ENCODE measurements at regions of chr11 and their contacts with region 1.

Region 1: GRCh38 chr11:78838417-78838816 is 263.8 kb upstream of the NARS2 start:
- DNase-seq: peak in 1 of 2 experiments; percentile 51
- H3K4me3 ChIP-seq: no peak overlapping the region
- H3K4me3 Mint-ChIP-seq: no peak overlapping the region
- H3K27ac Mint-ChIP-seq: no peak overlapping the region
- H3K4me1 ChIP-seq: no peaks in the 10 kb centered on the region
- H3K4me1 Mint-ChIP-seq: peaks cover 6% of the 10 kb centered on the region
- H3K27me3 ChIP-seq: no peaks in the 10 kb centered on the region
- H3K27me3 Mint-ChIP-seq: peaks cover 25% of the 10 kb centered on the region
- CTCF ChIP-seq: peak; percentile 62 to 69

Region 2: GRCh38 chr11:78645226-78646202 is 192.9 kb before region 1 on chr11:
- CTCF ChIA-PET with region 1: no interaction called
- POLR2A ChIA-PET with region 1: no interaction called
- intact Hi-C with region 1: no loop called
- DNase-seq: peak; percentile 82 to 90
- H3K4me3 ChIP-seq: no peak overlapping the region
- H3K4me3 Mint-ChIP-seq: no peak overlapping the region
- H3K27ac Mint-ChIP-seq: no peak overlapping the region
- H3K4me1 ChIP-seq: no peaks in the 10 kb centered on the region
- H3K4me1 Mint-ChIP-seq: no peaks in the 10 kb centered on the region
- H3K27me3 ChIP-seq: no peaks in the 10 kb centered on the region
- H3K27me3 Mint-ChIP-seq: peaks cover 11% of the 10 kb centered on the region
- CTCF ChIP-seq: peak; percentile 98 to 99

Region 3: DNA sequence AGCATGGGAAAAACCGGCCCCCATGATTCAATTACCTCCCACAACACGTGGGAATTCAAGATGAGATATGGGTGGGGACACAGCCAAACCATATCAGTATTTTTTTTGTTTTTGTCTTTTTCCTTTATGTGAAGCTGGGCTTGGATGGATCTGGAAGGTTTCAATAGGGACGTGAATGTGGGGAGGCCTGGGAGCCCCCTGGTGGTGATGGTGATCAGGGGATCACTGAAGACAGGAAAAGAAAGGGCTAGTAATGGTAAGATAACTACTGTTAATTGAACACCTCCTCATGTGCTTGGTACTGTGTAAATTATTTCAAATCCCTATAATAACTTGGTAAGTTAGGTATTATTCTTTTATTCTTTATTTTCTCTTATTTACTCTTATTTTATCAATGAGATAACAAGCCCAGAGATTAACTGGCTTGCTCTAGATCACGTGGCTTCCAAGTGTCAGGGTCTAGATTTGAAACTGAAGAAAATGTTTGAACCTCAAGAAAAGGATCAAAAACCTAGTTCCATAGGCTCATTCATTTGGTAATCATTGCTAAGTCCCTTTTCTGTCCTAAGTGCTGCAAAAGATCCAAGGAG is 238.2 kb after region 1 on chr11:
- CTCF ChIA-PET with region 1: no interaction called
- POLR2A ChIA-PET with region 1: no interaction called
- intact Hi-C with region 1: loop called (anchors 5 kb)
- DNase-seq: peak; percentile 60 to 77
- H3K4me3 ChIP-seq: no peak overlapping the region
- H3K4me3 Mint-ChIP-seq: no peak overlapping the region
- H3K27ac Mint-ChIP-seq: no peak overlapping the region
- H3K4me1 ChIP-seq: no peaks in the 10 kb centered on the region
- H3K4me1 Mint-ChIP-seq: no peaks in the 10 kb centered on the region
- H3K27me3 ChIP-seq: no peaks in the 10 kb centered on the region
- H3K27me3 Mint-ChIP-seq: no peaks in the 10 kb centered on the region
- CTCF ChIP-seq: peak; percentile 90 to 97

Region 4: GRCh38 chr11:79160791-79161403 is 322.5 kb after region 1 on chr11:
- CTCF ChIA-PET with region 1: no interaction called
- POLR2A ChIA-PET with region 1: no interaction called
- intact Hi-C with region 1: loop called (anchors 1 kb)
- DNase-seq: peak in 1 of 2 experiments; percentile 43
- H3K4me3 ChIP-seq: no peak overlapping the region
- H3K4me3 Mint-ChIP-seq: no peak overlapping the region
- H3K27ac Mint-ChIP-seq: no peak overlapping the region
- H3K4me1 ChIP-seq: peaks cover 7% of the 10 kb centered on the region
- H3K4me1 Mint-ChIP-seq: peaks cover 12% of the 10 kb centered on the region
- H3K27me3 ChIP-seq: peaks cover 1% of the 10 kb centered on the region; the same call in 1 of the 2 replicates
- H3K27me3 Mint-ChIP-seq: peaks cover 10% of the 10 kb centered on the region
- CTCF ChIP-seq: peak; percentile 57 to 85

Measured in Caco-2 (cell line).